Caco-2 (cell line): ENCODE measurements at regions of chr18 and their contacts with region 1.

Region 1: DNA sequence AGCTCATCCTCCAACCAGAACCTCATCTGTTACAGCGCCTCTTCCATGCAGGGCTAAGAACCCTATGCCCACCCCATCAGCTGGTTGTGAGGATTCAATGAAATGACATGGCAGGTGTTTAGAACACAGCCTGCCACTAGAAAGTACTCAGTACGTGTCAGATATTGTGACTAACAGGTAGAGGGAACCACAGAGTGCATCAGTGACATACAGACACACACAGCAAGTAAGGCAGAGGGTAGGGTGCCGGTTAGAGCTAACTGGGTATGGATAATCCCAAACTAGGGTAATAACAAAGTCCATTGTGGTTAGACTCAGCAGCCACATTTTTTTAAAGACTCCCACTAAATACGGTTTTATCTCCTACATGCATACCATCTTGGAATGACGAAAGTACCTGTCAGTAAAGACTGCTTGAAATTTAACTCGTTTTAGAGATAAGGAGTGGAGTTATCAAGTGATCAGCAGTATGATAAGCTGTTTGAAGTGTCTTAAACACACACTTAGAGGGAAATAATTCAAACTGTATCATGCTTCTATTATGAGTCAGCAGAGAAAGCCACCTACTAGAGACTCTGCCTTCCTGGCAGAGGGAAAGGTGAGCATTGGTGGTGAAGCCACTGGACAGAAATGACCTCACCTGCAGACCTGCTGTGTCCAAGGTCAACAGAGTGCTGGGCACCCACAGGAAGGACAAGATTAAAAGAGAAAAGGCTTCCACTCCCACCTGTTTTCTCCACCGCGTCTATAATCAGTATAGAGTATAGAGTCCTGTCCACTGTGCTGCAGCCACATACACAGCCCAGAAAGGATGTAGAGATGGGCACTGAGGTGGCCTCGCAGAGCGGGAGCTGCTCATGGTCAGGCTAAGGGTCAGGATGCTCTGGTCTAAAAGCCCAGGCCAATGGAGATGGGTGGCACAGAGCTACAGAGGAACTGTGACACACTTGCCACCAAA is 20.5 kb downstream of the MPPE1 start:
- DNase-seq: peak; percentile 82 to 89
- H3K4me3 ChIP-seq: no peak overlapping the region
- H3K4me3 Mint-ChIP-seq: peak overlapping the region; percentile 12
- H3K27ac Mint-ChIP-seq: peak overlapping the region; percentile 78
- H3K4me1 ChIP-seq: peaks cover 54% of the 10 kb centered on the region
- H3K4me1 Mint-ChIP-seq: peaks cover 34% of the 10 kb centered on the region
- H3K27me3 ChIP-seq: no peaks in the 10 kb centered on the region
- H3K27me3 Mint-ChIP-seq: no peaks in the 10 kb centered on the region
- CTCF ChIP-seq: no peak

Region 2: GRCh38 chr18:11553098-11553940 is 334.3 kb before region 1 on chr18:
- CTCF ChIA-PET with region 1: no interaction called
- POLR2A ChIA-PET with region 1: no interaction called
- intact Hi-C with region 1: no loop called
- DNase-seq: peak; percentile 55 to 69
- H3K4me3 ChIP-seq: no peak overlapping the region
- H3K4me3 Mint-ChIP-seq: no peak overlapping the region
- H3K27ac Mint-ChIP-seq: no peak overlapping the region
- H3K4me1 ChIP-seq: no peaks in the 10 kb centered on the region
- H3K4me1 Mint-ChIP-seq: no peaks in the 10 kb centered on the region
- H3K27me3 ChIP-seq: no peaks in the 10 kb centered on the region; the same call in 1 of the 2 replicates
- H3K27me3 Mint-ChIP-seq: peaks cover 4% of the 10 kb centered on the region
- CTCF ChIP-seq: peak; percentile 87 to 89

Region 3: DNA sequence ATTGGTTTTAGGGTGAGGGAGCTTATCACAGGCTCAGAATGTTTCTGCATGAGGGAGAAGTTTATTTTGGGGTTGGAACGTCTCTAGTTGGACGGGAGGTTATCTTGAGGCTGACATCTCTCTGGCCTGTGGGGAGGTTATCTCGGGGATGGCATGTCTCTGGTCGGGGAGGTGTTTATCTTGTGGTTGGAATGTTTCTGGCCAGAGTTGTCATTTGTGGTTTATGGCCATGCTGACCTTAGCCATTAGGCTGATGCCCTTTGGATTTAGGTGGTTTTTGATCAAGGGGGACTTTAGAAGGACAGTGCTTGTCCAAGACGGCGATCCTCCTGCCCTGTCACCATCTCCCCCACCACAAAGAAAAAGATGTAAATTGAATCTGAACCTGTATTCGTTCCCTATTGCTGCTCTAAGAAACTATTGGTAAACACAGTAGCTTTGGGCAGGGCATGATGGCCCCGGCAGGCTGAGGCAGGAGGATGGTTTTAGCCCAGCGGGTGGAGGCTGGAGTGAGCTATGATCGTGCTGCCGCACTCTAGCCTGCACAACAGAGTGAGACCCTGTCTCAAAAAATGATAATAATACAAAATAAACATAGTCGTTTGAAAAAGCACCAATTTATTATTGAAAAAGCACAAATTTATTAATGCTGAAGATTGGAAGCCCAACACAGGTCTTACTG is 38.4 kb after region 1 on chr18:
- CTCF ChIA-PET with region 1: interaction called, 4 read pairs
- POLR2A ChIA-PET with region 1: no interaction called
- intact Hi-C with region 1: loop called (anchors 1 kb)
- DNase-seq: peak; percentile 76 to 88
- H3K4me3 ChIP-seq: no peak overlapping the region
- H3K4me3 Mint-ChIP-seq: peak overlapping the region; percentile 9
- H3K27ac Mint-ChIP-seq: peak overlapping the region; percentile 42
- H3K4me1 ChIP-seq: peaks cover 33% of the 10 kb centered on the region
- H3K4me1 Mint-ChIP-seq: peaks cover 31% of the 10 kb centered on the region
- H3K27me3 ChIP-seq: no peaks in the 10 kb centered on the region
- H3K27me3 Mint-ChIP-seq: no peaks in the 10 kb centered on the region
- CTCF ChIP-seq: no peak